Right ventricle myocardium superior (tissue), 1 donor: ENCODE measurements at regions of chr1 and their contacts with region 1.

Region 1: GRCh38 chr1:180269761-180270527 is 39.9 kb downstream of the LHX4 start:
- DNase-seq: peak; percentile 52
- ATAC-seq: peak; percentile 61

Region 2: DNA sequence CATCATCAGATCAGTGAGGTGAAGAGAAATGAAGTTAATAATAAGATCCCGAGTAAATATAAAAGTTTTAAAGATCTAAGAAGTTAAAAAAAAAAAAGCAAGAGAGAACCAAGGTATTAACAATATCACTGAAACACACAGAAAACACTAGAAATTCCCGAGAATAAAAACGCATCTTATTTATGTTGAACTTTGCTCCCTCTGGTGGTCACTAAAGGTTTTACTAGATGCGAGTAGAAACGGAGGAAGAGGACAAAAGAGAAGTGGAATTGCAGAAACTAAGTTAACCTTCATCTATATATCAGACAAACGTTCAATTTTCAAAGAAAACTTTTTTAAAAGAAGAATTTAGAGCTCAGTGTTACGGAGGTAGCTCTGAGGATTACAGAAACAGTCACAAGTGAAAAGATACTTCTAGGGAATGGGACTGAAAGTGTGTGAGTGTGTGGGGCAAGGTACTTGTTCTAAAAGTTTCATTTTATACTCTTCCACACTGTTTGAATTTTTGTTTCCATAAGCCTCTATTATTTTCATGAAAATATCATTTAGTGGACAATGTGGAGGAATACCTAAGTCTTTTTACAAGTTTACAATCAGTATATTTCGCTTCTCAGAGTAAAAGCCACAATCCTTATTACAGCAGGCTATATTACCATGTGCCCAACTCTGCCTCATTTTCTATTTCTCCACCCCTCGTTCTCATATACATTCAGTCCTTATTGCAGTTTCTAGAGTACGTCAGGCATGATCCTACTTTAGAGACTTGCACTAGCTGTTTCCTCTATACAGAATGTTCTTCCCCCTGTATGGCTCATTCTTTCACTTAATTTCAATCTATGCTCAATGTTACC is 212.7 kb after region 1 on chr1:
- intact Hi-C with region 1: loop called (anchors 5 kb)
- DNase-seq: no peak
- ATAC-seq: peak; percentile 67